Heart left ventricle (tissue), 16 donors: ENCODE measurements at regions of chr12 and their contacts with region 1.

Region 1: DNA sequence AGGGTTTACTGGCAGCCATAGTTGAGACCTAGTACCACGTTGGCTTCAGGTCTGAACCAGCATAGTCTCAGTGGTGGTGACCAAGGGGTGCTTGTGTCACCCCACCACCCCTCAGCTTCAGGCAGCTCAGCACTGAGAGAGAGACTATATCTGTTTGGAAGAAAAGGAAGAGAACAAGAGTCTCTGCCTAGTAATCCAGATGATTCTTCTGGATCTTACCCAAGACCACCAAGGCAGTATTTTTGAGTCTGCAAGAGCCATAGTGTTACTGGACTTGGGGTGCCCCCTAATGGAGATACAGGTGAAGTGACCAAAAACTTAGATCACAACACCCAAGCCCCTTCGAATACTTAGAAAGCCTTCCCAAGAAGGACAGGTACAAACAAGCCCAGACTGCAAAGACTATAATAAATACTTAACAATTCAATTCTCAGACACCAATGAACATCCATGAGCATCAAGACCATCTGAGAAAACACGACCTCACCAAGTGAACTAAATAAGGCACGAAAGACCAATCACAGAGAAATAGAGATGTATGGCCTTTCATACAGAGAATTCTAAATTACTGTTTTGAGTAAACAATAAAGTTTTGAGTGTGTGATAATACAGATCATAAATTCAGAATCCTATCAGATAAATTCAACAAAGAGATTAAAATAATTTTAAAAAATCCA is 107.0 kb downstream of the HELB start:
- DNase-seq: no peak
- ATAC-seq: peak in 2 of 4 donors; percentile 39 to 49
- H3K4me3 ChIP-seq: no peak overlapping the region
- H3K27ac ChIP-seq: no peak overlapping the region
- H3K4me1 ChIP-seq: no peaks in the 10 kb centered on the region
- H3K27me3 ChIP-seq: peaks cover 0 to 5% (median 0%) of the 10 kb centered on the region in 9 donors
- CTCF ChIP-seq: peak; percentile 52 to 79 (median 70)
- POLR2A ChIP-seq: no peak

Region 2: DNA sequence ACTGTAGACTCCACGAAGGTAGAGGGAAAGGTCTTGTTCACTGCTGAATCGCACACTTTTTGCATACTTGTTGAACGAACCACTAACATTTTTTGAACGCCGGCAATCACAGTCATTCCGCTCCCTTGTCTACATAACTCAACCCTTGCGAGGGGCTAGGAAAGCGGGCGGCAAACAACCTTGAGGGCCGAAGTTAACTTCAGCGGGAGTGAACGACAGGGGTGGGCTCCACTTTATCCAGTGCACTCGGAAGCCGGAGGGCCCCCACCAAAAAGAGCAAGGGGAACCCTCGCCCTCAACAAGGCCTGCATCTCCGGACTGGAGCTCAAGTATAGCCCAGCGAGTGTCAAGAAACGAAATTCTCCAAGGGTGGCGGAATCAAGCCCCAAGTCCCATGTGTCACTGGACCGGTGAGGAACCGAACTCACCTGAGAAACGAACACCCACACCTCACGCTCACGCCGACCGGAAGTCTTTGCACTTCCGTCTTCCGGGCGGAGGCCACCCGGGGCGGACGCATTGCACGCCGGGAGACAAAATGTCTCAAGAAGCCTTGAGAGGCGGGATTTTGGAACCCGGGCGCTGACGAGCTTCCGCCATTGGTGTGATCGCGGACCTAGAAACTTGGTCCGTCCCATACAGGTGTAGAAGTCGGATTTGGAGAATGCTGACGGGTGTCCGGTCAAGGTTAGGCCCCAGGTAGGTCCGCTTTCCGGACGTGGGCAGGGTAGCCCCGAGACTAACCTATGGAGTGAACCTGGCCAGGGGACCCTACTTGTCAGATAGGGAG is 278.9 kb before region 1 on chr12 and contains the start of gene LLPH:
- intact Hi-C with region 1: loop called in 1 of 10 experiments (anchors 10 kb)
- DNase-seq: peak; percentile 88 to 95 (median 92)
- ATAC-seq: peak; percentile 92 to 96 (median 96)
- H3K4me3 ChIP-seq: peak within 1 kb of the TSS; percentile 58 to 96 (median 74)
- H3K27ac ChIP-seq: peak within 1 kb of the TSS in 11 of 12 donors; percentile 56 to 91 (median 80)
- H3K4me1 ChIP-seq: peaks cover 0 to 45% (median 29%) of the 10 kb centered on the region in 12 donors
- H3K27me3 ChIP-seq: no peaks in the 10 kb centered on the region
- CTCF ChIP-seq: peak in 1 of 12 donors; percentile 7
- POLR2A ChIP-seq: peak in 1 of 2 donors; percentile 52
- total RNA-seq, gene LLPH: 5.0 to 36.4 (median 18.3) TPM

Region 3: GRCh38 chr12:66144791-66145754 is 264.3 kb before region 1 on chr12:
- intact Hi-C with region 1: loop called in 1 of 10 experiments (anchors 10 kb)
- DNase-seq: peak in 2 of 5 donors; percentile 32 to 46
- ATAC-seq: peak; percentile 56 to 86 (median 84)
- H3K4me3 ChIP-seq: no peak overlapping the region
- H3K27ac ChIP-seq: peak overlapping the region in 11 of 12 donors; percentile 20 to 80 (median 62)
- H3K4me1 ChIP-seq: peaks cover 3 to 42% (median 19%) of the 10 kb centered on the region in 12 donors
- H3K27me3 ChIP-seq: no peaks in the 10 kb centered on the region
- CTCF ChIP-seq: peak in 11 of 12 donors; percentile 45 to 77 (median 68)
- POLR2A ChIP-seq: no peak

Region 4: DNA sequence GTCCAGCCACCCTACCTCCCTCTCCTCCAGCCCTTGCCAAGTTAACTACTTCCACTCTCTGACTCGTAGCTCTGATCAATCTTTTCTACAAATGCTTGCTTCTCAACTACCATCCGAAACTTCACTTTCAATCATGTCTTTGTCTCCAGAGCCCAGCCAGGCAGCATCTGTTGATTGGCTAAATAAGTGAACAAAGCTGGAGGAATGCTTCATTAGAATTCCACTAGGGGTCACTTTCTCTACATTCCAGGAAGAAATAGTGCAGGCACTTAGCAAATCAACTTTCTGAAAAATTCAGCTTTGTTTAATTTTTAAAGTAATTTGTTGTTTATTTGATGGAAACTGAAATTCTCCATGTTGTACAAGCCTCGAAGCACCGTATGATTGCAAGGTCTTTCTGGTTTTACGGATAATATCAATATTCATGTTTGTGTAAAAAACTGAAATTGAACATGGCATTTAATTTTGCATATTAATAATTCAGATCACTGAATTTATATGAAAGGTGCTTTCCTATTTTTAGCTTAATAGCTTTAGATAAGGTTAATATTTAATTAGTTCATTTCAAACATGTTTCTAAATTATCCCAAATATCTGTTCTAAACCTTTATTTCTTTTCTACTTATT is 139.5 kb before region 1 on chr12:
- intact Hi-C with region 1: loop called in 9 of 10 experiments (anchors 5 kb)
- DNase-seq: no peak
- ATAC-seq: peak in 1 of 4 donors; percentile 47
- H3K4me3 ChIP-seq: no peak overlapping the region
- H3K27ac ChIP-seq: peak overlapping the region in 1 of 12 donors; percentile 76
- H3K4me1 ChIP-seq: peaks cover 0 to 26% (median 0%) of the 10 kb centered on the region in 12 donors
- H3K27me3 ChIP-seq: peaks cover 0 to 8% (median 0%) of the 10 kb centered on the region in 9 donors
- CTCF ChIP-seq: peak; percentile 14 to 70 (median 53)
- POLR2A ChIP-seq: no peak

Region 5: GRCh38 chr12:66279123-66279712 is 130.1 kb before region 1 on chr12:
- intact Hi-C with region 1: loop called in 9 of 10 experiments (anchors 5 kb)
- DNase-seq: no peak
- ATAC-seq: no peak
- H3K4me3 ChIP-seq: no peak overlapping the region
- H3K27ac ChIP-seq: no peak overlapping the region
- H3K4me1 ChIP-seq: peaks cover 0 to 16% (median 0%) of the 10 kb centered on the region in 12 donors
- H3K27me3 ChIP-seq: peaks cover 0 to 5% (median 0%) of the 10 kb centered on the region in 9 donors
- CTCF ChIP-seq: peak; percentile 25 to 60 (median 42)
- POLR2A ChIP-seq: no peak

Region 6: DNA sequence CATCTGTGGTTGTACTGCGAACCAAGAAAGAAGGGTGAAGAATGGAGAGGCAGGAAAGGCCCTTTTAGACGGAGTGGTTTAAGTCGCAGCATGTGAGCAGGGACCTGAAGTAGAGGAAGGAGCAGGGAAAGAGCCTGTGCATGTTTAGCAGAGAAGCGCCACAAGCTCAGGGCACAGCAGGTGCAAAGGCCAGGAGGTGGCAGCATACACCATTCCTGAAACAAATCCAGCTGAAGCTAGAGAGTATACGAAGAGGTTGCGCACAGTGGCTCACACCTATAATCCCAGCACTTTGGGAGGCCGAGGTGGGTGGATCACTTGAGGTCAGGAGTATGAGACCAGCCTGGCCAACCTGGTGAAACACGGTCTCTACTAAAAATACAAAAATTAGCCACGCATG is 57.1 kb before region 1 on chr12:
- intact Hi-C with region 1: loop called in 1 of 10 experiments (anchors 5 kb)
- DNase-seq: peak in 2 of 5 donors; percentile 37 to 53
- ATAC-seq: peak in 1 of 4 donors; percentile 52
- H3K4me3 ChIP-seq: no peak overlapping the region
- H3K27ac ChIP-seq: no peak overlapping the region
- H3K4me1 ChIP-seq: no peaks in the 10 kb centered on the region
- H3K27me3 ChIP-seq: no peaks in the 10 kb centered on the region
- CTCF ChIP-seq: peak in 9 of 12 donors; percentile 10 to 40 (median 24)
- POLR2A ChIP-seq: no peak

Region 7: GRCh38 chr12:66467932-66468331 is 58.6 kb after region 1 on chr12:
- intact Hi-C with region 1: no loop called
- DNase-seq: no peak
- ATAC-seq: no peak
- H3K4me3 ChIP-seq: no peak overlapping the region
- H3K27ac ChIP-seq: no peak overlapping the region
- H3K4me1 ChIP-seq: no peaks in the 10 kb centered on the region
- H3K27me3 ChIP-seq: peaks cover 0 to 5% (median 0%) of the 10 kb centered on the region in 9 donors
- CTCF ChIP-seq: no peak
- POLR2A ChIP-seq: no peak